Activated naive CD4-positive, alpha-beta T cell treated with anti-CD3 and anti-CD28 coated beads for 36 hours (primary cell): ENCODE measurements at regions of chr3 and their contacts with region 1.

Region 1: GRCh38 chr3:50350527-50351322 is at the starts of genes CYB561D2 and NPRL2:
- DNase-seq: peak; percentile 99
- H3K4me3 Mint-ChIP-seq: peak within 1 kb of the TSS; percentile 97
- H3K27ac Mint-ChIP-seq: peak within 1 kb of the TSS; percentile 97
- H3K4me1 Mint-ChIP-seq: peaks cover 59% of the 10 kb centered on the region
- H3K27me3 Mint-ChIP-seq: no peaks in the 10 kb centered on the region
- total RNA-seq, gene CYB561D2: 11.0 to 11.3 TPM
- total RNA-seq, gene NPRL2: 27.7 to 31.3 TPM

Region 2: DNA sequence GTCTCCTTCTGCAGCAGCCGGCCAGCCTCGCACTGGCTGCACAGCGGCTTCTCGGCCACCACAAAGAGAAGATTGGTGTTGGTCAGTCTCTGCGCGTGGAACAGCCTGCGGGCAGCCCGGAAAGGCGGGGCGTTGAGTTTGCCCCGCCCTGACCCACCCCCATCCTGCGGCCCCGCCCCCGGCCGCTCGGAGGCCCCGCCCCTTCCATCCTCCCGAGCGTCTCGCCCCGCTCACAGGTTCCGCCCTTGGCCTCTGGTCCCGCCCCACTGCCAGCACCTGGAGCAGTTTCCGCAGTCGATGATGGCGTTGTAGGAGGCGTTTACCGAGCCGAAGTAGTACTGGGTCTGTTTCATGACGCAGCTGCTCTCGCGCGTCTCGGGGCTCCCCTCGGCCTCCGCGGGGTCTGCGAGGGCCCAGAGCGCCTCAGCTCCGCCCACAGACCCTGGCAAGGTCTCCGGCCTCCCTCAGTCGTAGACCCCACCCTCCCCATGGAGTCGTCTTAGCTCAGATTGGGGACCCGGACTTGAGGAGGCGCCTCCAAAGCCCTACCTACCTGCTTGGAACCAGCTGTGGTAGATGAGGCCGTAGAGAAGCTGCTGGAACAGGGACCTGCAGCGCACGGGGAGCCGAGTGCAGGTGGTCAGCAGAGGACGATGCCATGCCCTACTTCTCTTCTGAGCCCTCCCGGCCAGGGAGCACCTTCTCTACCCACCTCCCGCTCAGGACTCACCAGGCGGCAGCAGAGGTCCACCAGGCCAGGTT is 14.5 kb after region 1 on chr3:
- CTCF ChIA-PET with region 1: interaction called, 6 read pairs
- intact Hi-C with region 1: loop called (anchors 1 kb)
- DNase-seq: peak; percentile 98
- H3K4me3 Mint-ChIP-seq: peak overlapping the region; percentile 79
- H3K27ac Mint-ChIP-seq: peak overlapping the region; percentile 50
- H3K4me1 Mint-ChIP-seq: peaks cover 17% of the 10 kb centered on the region
- H3K27me3 Mint-ChIP-seq: no peaks in the 10 kb centered on the region

Region 3: GRCh38 chr3:50542177-50543034 is 191.7 kb after region 1 on chr3:
- CTCF ChIA-PET with region 1: interaction called, 29 read pairs
- intact Hi-C with region 1: loop called (anchors 1 kb)
- DNase-seq: peak; percentile 71
- H3K4me3 Mint-ChIP-seq: no peak overlapping the region
- H3K27ac Mint-ChIP-seq: no peak overlapping the region
- H3K4me1 Mint-ChIP-seq: no peaks in the 10 kb centered on the region
- H3K27me3 Mint-ChIP-seq: no peaks in the 10 kb centered on the region

Region 4: GRCh38 chr3:50792568-50792967 is 441.8 kb after region 1 on chr3:
- CTCF ChIA-PET with region 1: no interaction called
- intact Hi-C with region 1: no loop called
- DNase-seq: no peak
- H3K4me3 Mint-ChIP-seq: no peak overlapping the region
- H3K27ac Mint-ChIP-seq: no peak overlapping the region
- H3K4me1 Mint-ChIP-seq: no peaks in the 10 kb centered on the region
- H3K27me3 Mint-ChIP-seq: peaks cover 5% of the 10 kb centered on the region

Region 5: DNA sequence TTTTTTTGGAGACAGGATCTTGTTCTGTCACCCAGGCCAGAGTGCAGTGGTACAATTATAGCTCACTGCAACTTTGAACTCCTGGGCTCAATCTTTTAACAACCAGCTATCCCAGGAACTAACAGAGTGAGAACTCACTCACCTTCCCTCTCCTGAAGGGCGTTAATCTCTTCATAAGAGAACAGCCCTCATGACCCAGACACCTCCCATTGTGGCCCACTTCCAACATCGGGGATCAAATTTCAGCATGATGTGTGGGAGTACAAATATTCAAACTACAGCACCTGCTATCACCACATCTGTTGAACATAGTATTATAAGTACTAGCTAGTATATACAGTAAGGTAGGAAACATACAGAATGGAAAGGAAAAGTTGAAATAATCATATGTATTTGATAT is 456.5 kb after region 1 on chr3:
- CTCF ChIA-PET with region 1: no interaction called
- intact Hi-C with region 1: no loop called
- DNase-seq: no peak
- H3K4me3 Mint-ChIP-seq: no peak overlapping the region
- H3K27ac Mint-ChIP-seq: no peak overlapping the region
- H3K4me1 Mint-ChIP-seq: no peaks in the 10 kb centered on the region
- H3K27me3 Mint-ChIP-seq: no peaks in the 10 kb centered on the region